ENCODE measurements at regions of chr2 and their contacts with region 1.

Region 1: DNA sequence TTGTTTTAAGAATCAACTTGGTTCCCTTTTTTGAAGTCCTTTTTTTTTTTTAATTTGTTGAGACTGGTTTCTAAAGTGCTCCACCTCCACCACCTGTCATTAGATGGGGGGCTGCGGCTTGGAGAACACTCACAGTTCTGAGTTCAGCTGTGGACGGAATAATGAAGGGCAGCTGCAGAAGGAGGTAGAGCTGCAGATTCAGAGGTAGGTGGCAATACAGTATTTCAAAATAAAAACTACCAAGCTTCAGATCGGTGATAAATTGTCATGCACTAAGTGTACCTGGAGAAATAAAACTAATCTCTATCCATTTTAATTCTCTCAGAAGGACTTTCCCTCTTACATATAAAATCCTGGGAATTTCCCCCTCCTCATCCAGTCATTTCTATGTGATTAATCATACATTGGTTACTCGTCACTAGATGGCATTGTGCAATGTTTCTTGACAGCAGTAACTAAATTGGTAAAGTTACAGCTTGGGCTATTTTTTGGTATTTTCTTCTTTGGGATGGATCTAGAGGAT is 81.1 kb upstream of the SLC39A10 start:
- DNase-seq: peak; percentile 85
- ATAC-seq: peak; percentile 91
- H3K4me3 ChIP-seq: peak overlapping the region in 4 of 5 experiments; percentile 9 to 40 (median 24)
- H3K4me3 Mint-ChIP-seq: peak overlapping the region; percentile 63
- H3K27ac ChIP-seq: peak overlapping the region; percentile 11 to 62
- H3K27ac Mint-ChIP-seq: peak overlapping the region; percentile 76
- H3K4me1 ChIP-seq: peaks cover 43 to 47% of the 10 kb centered on the region in 2 donors
- H3K4me1 Mint-ChIP-seq: peaks cover 54% of the 10 kb centered on the region
- H3K27me3 ChIP-seq: no peaks in the 10 kb centered on the region
- H3K27me3 Mint-ChIP-seq: no peaks in the 10 kb centered on the region
- CTCF ChIP-seq: peak; percentile 42

Region 2: DNA sequence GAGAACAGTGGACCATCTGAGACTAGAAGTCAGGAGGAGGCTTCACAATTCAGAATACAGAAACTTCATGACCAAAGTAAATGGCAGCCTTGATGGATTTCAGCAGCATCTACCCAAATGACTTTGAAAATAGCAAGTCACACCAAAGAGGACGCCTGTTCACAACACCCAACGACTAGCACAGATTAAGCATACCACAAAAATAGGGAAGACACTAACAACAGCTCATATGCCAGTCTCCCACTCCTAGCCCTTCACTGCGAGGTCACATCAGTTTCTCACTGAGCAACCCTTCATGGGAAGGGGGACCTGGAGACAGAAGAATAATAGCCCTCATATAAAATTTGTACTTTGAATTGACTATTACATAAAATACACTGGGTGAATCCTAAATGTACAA is 147.3 kb before region 1 on chr2:
- CTCF ChIA-PET with region 1: no interaction called
- POLR2A ChIA-PET with region 1: no interaction called
- intact Hi-C with region 1: no loop called
- DNase-seq: no peak
- ATAC-seq: no peak
- H3K4me3 ChIP-seq: no peak overlapping the region
- H3K4me3 Mint-ChIP-seq: no peak overlapping the region
- H3K27ac ChIP-seq: no peak overlapping the region
- H3K27ac Mint-ChIP-seq: no peak overlapping the region
- H3K4me1 ChIP-seq: no peaks in the 10 kb centered on the region
- H3K4me1 Mint-ChIP-seq: no peaks in the 10 kb centered on the region
- H3K27me3 ChIP-seq: no peaks in the 10 kb centered on the region
- H3K27me3 Mint-ChIP-seq: no peaks in the 10 kb centered on the region
- CTCF ChIP-seq: no peak

Region 3: DNA sequence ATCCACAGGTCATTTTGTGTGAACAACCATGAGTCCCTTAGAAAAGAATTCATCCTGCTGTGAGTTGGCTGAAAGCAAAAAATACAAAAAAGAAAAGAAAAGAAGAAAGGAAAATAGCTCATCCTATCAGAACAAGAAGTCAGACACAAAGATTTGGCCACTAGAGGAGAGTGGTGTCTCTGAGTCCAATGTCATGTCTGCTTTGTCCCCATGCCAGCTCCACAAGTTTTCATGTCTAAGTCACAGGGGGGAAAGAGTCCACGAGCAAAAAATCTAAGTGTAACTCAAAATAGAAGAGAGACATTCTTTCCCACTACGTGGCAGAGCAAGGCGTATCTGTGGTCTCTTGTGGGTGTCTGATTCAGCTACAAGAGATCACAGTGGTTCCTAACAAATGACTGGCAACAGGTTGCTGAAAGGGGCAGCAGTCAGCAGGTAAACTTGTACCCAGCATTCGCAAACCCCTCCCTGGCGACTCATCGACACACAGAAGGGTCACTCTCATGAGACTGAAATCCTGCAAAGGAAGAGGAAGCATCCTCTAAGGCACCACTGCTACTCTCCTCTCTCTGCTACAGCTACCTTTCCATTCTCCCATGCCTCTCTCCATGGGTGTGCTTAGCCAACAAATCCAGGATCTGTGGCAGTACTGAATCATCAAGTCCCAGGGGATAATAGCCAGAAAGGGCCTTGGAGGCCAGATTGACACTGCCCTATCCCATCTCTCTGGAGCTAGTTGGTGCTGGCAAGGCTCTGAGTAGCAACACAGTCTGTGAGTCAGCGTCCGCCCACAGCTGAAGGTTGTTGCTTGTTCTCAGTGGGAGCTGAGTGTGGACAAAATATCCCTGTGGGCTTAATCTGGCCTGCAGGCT is 41.9 kb before region 1 on chr2:
- CTCF ChIA-PET with region 1: interaction called, 65 read pairs
- POLR2A ChIA-PET with region 1: interaction called, 4 read pairs
- intact Hi-C with region 1: loop called (anchors 1 kb)
- DNase-seq: peak; percentile 31
- ATAC-seq: peak; percentile 60
- H3K4me3 ChIP-seq: peak overlapping the region in 1 of 5 experiments; percentile 62
- H3K4me3 Mint-ChIP-seq: peak overlapping the region; percentile 83
- H3K27ac ChIP-seq: peak overlapping the region; percentile 62 to 83
- H3K27ac Mint-ChIP-seq: peak overlapping the region; percentile 92
- H3K4me1 ChIP-seq: peaks cover 57 to 58% of the 10 kb centered on the region in 2 donors
- H3K4me1 Mint-ChIP-seq: peaks cover 65% of the 10 kb centered on the region
- H3K27me3 ChIP-seq: no peaks in the 10 kb centered on the region
- H3K27me3 Mint-ChIP-seq: no peaks in the 10 kb centered on the region
- CTCF ChIP-seq: no peak

Region 4: GRCh38 chr2:195559431-195559914 is 16.5 kb before region 1 on chr2:
- CTCF ChIA-PET with region 1: interaction called, 91 read pairs
- POLR2A ChIA-PET with region 1: interaction called, 7 read pairs
- intact Hi-C with region 1: loop called (anchors 1 kb)
- DNase-seq: peak; percentile 83
- ATAC-seq: peak; percentile 66
- H3K4me3 ChIP-seq: peak overlapping the region in 1 of 5 experiments; percentile 37
- H3K4me3 Mint-ChIP-seq: peak overlapping the region; percentile 74
- H3K27ac ChIP-seq: peak overlapping the region; percentile 92 to 94
- H3K27ac Mint-ChIP-seq: peak overlapping the region; percentile 98
- H3K4me1 ChIP-seq: peaks cover 54 to 73% of the 10 kb centered on the region in 2 donors
- H3K4me1 Mint-ChIP-seq: peaks cover 58% of the 10 kb centered on the region
- H3K27me3 ChIP-seq: no peaks in the 10 kb centered on the region
- H3K27me3 Mint-ChIP-seq: no peaks in the 10 kb centered on the region
- CTCF ChIP-seq: no peak

Region 5: DNA sequence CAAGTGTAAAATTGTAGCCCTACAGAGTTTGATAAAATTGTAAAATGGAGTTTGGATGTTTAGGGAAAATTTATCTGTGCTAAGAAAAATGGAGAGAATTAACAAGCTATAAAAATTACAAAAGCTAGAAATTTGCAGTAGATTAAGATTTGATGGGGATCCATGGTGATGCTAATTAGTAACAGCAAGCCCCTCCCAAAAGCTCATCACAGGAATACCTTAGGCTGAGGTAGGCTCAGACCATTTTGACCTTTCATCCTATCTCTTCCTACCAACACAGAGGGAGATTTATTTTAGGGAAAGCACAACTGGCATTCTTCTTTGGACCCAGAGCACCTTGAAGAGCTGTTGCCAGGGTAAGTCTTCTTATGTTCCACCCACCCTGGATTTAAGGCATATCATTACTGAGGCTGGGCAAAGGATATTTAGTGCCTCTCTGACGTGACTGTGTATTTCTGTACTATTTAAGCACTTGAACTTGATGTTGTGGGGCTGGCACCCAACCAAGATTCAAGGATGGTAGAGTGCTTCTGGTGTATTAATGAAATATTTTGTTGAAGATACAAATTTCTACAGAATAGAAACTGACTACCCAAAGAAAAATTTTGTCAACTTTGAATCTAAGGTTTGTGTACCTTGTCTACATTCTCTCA is 10.2 kb after region 1 on chr2:
- CTCF ChIA-PET with region 1: interaction called, 12 read pairs
- POLR2A ChIA-PET with region 1: no interaction called
- intact Hi-C with region 1: no loop called
- DNase-seq: no peak
- ATAC-seq: no peak
- H3K4me3 ChIP-seq: no peak overlapping the region
- H3K4me3 Mint-ChIP-seq: no peak overlapping the region
- H3K27ac ChIP-seq: no peak overlapping the region
- H3K27ac Mint-ChIP-seq: peak overlapping the region; percentile 26
- H3K4me1 ChIP-seq: no peaks in the 10 kb centered on the region
- H3K4me1 Mint-ChIP-seq: no peaks in the 10 kb centered on the region
- H3K27me3 ChIP-seq: no peaks in the 10 kb centered on the region
- H3K27me3 Mint-ChIP-seq: no peaks in the 10 kb centered on the region
- CTCF ChIP-seq: no peak

Region 6: GRCh38 chr2:195649629-195650190 is 73.8 kb after region 1 on chr2:
- CTCF ChIA-PET with region 1: interaction called, 54 read pairs
- POLR2A ChIA-PET with region 1: interaction called, 6 read pairs
- intact Hi-C with region 1: no loop called
- DNase-seq: peak; percentile 76
- ATAC-seq: peak; percentile 18
- H3K4me3 ChIP-seq: peak overlapping the region; percentile 11 to 48 (median 38)
- H3K4me3 Mint-ChIP-seq: peak overlapping the region; percentile 86
- H3K27ac ChIP-seq: peak overlapping the region; percentile 93 to 95
- H3K27ac Mint-ChIP-seq: peak overlapping the region; percentile 94
- H3K4me1 ChIP-seq: peaks cover 66 to 67% of the 10 kb centered on the region in 2 donors
- H3K4me1 Mint-ChIP-seq: peaks cover 67% of the 10 kb centered on the region
- H3K27me3 ChIP-seq: no peaks in the 10 kb centered on the region
- H3K27me3 Mint-ChIP-seq: no peaks in the 10 kb centered on the region
- CTCF ChIP-seq: no peak

Region 7: GRCh38 chr2:196068271-196069209 is 492.6 kb after region 1 on chr2 and contains the start of gene DNAH7:
- CTCF ChIA-PET with region 1: interaction called, 27 read pairs
- POLR2A ChIA-PET with region 1: no interaction called
- intact Hi-C with region 1: loop called (anchors 2 kb)
- DNase-seq: peak; percentile 96
- ATAC-seq: peak; percentile 92
- H3K4me3 ChIP-seq: peak within 1 kb of the TSS; percentile 46 to 81 (median 64)
- H3K4me3 Mint-ChIP-seq: peak within 1 kb of the TSS; percentile 96
- H3K27ac ChIP-seq: peak within 1 kb of the TSS; percentile 30 to 73
- H3K27ac Mint-ChIP-seq: peak within 1 kb of the TSS; percentile 93
- H3K4me1 ChIP-seq: peaks cover 12 to 13% of the 10 kb centered on the region in 2 donors
- H3K4me1 Mint-ChIP-seq: peaks cover 15% of the 10 kb centered on the region
- H3K27me3 ChIP-seq: no peaks in the 10 kb centered on the region
- H3K27me3 Mint-ChIP-seq: peaks cover 2% of the 10 kb centered on the region
- CTCF ChIP-seq: peak; percentile 97
- total RNA-seq, gene DNAH7: 0.05 TPM in 1 of 2 replicates, not detected in the other

Measured in B cell (primary cell).